IMR-90 (cell line): ENCODE measurements at regions of chr22 and their contacts with region 1.

Region 1: DNA sequence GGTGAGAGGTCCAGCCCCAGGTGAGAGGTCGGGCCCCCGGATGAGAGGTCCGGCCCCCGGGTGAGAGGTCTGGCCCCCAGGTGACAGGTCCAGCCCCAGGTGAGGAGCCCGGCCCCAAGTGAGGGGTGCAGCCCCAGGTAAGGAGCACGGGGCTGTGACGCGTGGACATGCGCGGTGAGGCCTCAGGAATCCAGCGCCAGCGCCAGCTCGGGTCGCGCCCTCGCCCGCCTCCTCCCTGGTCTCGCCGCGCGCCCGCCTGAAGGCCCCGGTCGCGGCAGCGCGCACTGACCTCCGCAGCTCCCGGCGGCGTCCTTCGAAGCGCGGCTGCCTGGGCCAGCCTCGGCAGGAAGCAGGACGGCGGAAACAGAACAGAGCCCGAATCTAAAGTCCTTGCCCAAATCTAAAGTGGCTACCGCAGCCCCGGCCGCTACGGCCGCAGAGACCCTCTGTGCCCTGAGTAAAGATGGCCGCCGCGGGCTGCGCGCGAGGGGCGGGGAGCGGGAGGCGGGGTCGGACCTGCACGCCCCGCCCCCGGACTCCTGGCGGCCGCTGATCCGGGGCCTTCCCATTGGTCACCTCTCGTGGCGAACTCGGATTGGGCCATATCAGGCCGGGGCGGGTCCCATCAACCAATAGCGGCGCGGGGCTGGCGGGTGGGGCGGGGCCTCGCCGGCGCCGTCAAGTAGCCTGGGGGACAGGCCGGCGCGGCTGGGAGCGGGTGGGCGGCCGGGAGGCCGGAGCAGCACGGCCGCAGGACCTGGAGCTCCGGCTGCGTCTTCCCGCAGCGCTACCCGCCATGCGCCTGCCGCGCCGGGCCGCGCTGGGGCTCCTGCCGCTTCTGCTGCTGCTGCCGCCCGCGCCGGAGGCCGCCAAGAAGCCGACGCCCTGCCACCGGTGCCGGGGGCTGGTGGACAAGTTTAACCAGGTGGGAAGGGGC is at the starts of genes ALG12 and CRELD2:
- DNase-seq: peak; percentile 96
- ATAC-seq: peak; percentile 99
- H3K4me3 ChIP-seq: peak within 1 kb of the TSS; percentile 80
- H3K27ac ChIP-seq: peak within 1 kb of the TSS; percentile 74
- H3K4me1 ChIP-seq: peaks cover 14% of the 10 kb centered on the region
- H3K27me3 ChIP-seq: no peaks in the 10 kb centered on the region
- CTCF ChIP-seq: peak; percentile 17; the same call in 1 of the 2 replicates
- POLR2A ChIP-seq: peak; percentile 93
- RAD21 ChIP-seq: no peak
- total RNA-seq, gene ALG12: 5.6 and 7.2 TPM in 2 replicates
- total RNA-seq, gene CRELD2: 36.1 and 36.2 TPM in 2 replicates

Region 2: DNA sequence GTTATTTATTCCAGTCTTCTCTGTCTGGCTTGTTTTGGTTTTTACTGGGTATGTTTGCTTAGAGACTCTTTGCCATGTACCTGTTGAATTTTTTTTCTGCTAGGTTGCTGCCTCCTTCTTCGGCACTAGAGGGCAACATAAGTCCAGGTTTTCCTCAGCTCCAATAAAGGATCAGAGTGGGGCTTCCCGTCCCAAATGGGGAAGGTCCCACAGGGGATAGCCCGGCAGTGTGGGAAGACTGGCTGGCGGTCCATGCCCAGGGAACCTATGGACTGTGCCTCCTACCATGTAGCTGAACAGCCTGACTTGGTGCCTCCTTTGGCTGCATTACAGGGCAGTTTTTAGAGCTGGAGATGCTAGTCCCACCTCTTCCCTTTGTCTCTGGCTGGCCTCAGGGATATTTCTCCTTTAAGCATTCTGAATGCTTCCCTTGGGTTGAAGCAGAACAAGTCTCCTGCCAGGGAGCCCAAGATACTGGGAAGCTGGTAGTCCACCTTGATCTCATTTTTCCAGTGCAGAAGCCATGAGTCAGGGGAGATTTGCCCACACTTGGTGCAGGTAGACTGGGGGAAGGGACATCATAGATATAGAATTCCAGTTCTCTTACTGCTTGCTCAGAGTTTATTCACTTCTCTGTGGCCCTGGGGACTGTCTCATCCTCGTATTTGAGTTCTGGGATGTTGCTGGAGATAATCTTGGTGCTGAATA is 150.7 kb before region 1 on chr22:
- CTCF ChIA-PET with region 1: interaction called, 3 read pairs
- POLR2A ChIA-PET with region 1: no interaction called
- dilution Hi-C with region 1: no loop called
- in situ Hi-C with region 1: no loop called
- intact Hi-C with region 1: loop called (anchors 1 kb)
- DNase-seq: peak; percentile 57
- ATAC-seq: peak; percentile 24; the same call in 1 of the 2 replicates
- H3K4me3 ChIP-seq: no peak overlapping the region
- H3K27ac ChIP-seq: no peak overlapping the region
- H3K4me1 ChIP-seq: peaks cover 11% of the 10 kb centered on the region
- H3K27me3 ChIP-seq: no peaks in the 10 kb centered on the region
- CTCF ChIP-seq: peak; percentile 71
- POLR2A ChIP-seq: peak; percentile 25; the same call in 1 of the 2 replicates
- RAD21 ChIP-seq: peak; percentile 73

Region 3: GRCh38 chr22:49789289-49790141 is 128.7 kb before region 1 on chr22:
- CTCF ChIA-PET with region 1: no interaction called
- POLR2A ChIA-PET with region 1: no interaction called
- dilution Hi-C with region 1: no loop called
- in situ Hi-C with region 1: no loop called
- intact Hi-C with region 1: no loop called
- DNase-seq: peak; percentile 45
- ATAC-seq: peak; percentile 75
- H3K4me3 ChIP-seq: no peak overlapping the region
- H3K27ac ChIP-seq: peak overlapping the region; percentile 32; the same call in 1 of the 2 replicates
- H3K4me1 ChIP-seq: peaks cover 14% of the 10 kb centered on the region
- H3K27me3 ChIP-seq: no peaks in the 10 kb centered on the region
- CTCF ChIP-seq: no peak
- POLR2A ChIP-seq: no peak
- RAD21 ChIP-seq: no peak

Region 4: GRCh38 chr22:49815641-49816071 is 102.6 kb before region 1 on chr22:
- CTCF ChIA-PET with region 1: no interaction called
- POLR2A ChIA-PET with region 1: no interaction called
- dilution Hi-C with region 1: no loop called
- in situ Hi-C with region 1: loop called (anchors 25 kb)
- intact Hi-C with region 1: no loop called
- DNase-seq: peak; percentile 19
- ATAC-seq: peak; percentile 7; the same call in 1 of the 2 replicates
- H3K4me3 ChIP-seq: no peak overlapping the region
- H3K27ac ChIP-seq: no peak overlapping the region
- H3K4me1 ChIP-seq: peaks cover 9% of the 10 kb centered on the region
- H3K27me3 ChIP-seq: no peaks in the 10 kb centered on the region
- CTCF ChIP-seq: no peak
- POLR2A ChIP-seq: no peak
- RAD21 ChIP-seq: no peak

Region 5: DNA sequence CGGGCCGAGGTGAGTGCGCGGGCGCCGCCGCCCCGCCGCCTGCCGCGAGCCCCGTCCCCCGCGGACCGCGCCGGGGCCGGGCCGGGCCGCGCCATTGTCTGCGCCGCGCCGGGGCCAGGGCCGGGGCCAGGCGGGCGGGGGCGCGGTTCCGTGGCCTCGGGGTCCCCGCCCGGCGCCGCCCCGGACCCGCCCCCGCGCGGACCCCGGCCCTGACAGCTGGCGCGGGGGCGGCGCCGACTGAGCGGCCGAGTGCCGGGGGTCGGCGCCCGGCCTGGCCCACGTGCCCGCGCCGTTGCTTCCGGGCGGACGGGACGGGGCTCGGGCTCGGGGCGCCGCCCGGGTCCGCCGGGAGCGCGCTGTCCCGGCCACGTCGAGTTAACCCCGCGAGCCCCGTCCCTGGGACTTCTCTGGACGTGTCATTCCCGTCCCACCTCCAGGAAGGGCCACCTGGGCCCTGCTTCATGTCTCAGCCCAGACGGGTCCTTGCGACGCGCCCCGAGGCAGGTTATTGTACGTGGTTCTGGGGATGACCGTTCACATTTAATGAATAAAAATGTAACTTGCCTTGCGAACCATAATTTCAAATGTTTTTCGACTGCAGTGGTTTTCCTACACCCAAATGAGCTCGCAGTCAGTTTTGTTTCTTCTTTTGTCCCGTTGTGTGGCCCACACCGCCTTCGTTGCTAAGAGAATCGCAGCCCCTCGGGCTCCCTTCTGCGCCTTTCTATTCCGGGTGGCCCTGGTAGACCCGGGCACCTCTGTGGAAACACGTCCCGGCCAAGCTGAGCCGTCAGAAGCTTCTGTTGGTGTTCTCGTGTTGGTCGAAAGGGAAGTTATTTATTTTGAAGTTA is 64.0 kb before region 1 on chr22:
- CTCF ChIA-PET with region 1: no interaction called
- POLR2A ChIA-PET with region 1: no interaction called
- dilution Hi-C with region 1: no loop called
- in situ Hi-C with region 1: no loop called
- intact Hi-C with region 1: loop called (anchors 2 kb)
- DNase-seq: peak; percentile 17
- ATAC-seq: peak; percentile 27
- H3K4me3 ChIP-seq: peak overlapping the region; percentile 78
- H3K27ac ChIP-seq: peak overlapping the region; percentile 64
- H3K4me1 ChIP-seq: peaks cover 6% of the 10 kb centered on the region
- H3K27me3 ChIP-seq: peaks cover 17% of the 10 kb centered on the region
- CTCF ChIP-seq: no peak
- POLR2A ChIP-seq: no peak
- RAD21 ChIP-seq: no peak

Region 6: DNA sequence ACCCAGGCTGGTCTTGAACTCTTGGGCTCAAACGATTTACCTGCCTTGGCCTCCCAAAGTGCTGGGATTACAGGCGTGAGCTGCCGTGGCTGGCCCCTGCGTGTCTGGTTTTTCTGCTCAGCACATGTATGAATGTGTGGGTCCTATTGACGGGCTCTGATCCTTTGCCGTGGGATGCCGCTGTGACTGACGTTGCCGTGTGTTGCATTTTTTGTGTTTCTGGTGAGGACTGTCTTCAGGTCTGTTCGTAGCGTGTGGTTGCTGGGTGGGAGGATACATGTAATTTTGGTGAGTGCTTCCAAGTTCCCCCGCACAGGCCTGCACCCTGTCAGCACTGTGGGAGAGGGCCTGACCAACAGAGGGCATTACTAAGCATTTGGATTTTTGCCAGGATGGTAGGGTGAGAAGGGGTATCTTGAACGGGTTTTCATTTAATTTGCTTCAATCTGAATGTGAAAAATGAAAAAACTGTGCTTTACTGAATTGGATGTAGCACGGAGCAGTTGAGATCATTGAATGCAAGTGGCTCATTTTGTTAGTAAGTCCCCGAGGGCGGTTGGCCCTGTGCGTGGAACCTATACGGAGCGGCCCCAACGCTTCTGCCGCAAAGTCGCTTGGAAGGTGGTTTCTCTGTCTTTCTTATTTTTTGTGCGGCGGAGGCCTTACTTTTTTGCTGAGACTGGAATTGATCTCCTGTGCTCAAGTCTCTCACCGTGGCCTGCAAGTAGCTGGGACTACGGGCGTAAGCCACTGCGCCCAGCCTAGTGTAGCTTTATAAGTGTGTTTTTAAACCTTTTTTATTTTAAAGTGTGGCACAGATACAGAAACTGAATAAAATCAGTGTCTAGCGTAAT is 56.4 kb before region 1 on chr22:
- CTCF ChIA-PET with region 1: no interaction called
- POLR2A ChIA-PET with region 1: no interaction called
- dilution Hi-C with region 1: no loop called
- in situ Hi-C with region 1: loop called (anchors 10 kb)
- intact Hi-C with region 1: no loop called
- DNase-seq: no peak
- ATAC-seq: no peak
- H3K4me3 ChIP-seq: no peak overlapping the region
- H3K27ac ChIP-seq: no peak overlapping the region
- H3K4me1 ChIP-seq: no peaks in the 10 kb centered on the region
- H3K27me3 ChIP-seq: no peaks in the 10 kb centered on the region
- CTCF ChIP-seq: no peak
- POLR2A ChIP-seq: no peak
- RAD21 ChIP-seq: no peak

Region 7: DNA sequence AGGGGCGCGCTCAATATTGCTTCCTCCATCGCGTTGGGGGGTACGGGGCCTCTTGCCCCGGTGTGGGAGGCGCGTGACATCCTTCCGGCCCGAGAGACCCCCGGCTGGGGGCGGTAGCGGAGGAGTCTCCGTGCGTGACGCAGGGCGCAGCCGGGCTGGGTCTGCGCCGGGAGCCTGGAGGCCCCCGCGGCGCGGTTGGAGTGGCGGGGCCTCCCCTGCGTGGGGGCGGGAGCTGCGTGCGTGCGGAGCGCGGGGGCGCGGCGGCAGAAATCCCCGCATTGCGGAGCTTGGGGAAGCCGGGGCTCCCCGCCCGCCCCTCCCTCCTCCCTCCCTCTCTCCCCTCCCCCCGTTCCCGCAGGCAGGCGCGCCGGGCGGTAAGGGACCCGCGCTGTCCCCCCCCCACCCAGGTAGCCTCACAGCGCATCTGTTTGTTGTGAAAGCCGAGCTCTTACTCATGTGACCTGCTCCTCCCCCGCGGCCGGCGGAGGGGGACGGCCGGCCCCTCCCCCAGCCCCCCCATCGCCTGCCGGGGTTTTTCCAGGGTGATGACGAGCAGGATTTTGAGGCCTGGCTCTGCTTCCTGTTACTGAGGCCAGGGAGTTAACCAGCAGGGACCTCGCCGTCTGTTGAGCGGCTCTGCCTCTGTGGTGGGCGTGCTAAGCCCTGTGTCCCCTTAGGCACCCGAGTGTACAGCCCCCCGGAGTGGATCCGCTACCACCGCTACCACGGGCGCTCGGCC is 43.9 kb after region 1 on chr22:
- CTCF ChIA-PET with region 1: no interaction called
- POLR2A ChIA-PET with region 1: no interaction called
- dilution Hi-C with region 1: no loop called
- in situ Hi-C with region 1: no loop called
- intact Hi-C with region 1: loop called (anchors 1 kb)
- DNase-seq: peak; percentile 93
- ATAC-seq: peak; percentile 50
- H3K4me3 ChIP-seq: peak overlapping the region; percentile 58
- H3K27ac ChIP-seq: peak overlapping the region; percentile 98
- H3K4me1 ChIP-seq: peaks cover 31% of the 10 kb centered on the region
- H3K27me3 ChIP-seq: no peaks in the 10 kb centered on the region
- CTCF ChIP-seq: no peak
- POLR2A ChIP-seq: peak; percentile 85
- RAD21 ChIP-seq: no peak